ENCODE measurements at regions of chr2 and their contacts with region 1.

Region 1: DNA sequence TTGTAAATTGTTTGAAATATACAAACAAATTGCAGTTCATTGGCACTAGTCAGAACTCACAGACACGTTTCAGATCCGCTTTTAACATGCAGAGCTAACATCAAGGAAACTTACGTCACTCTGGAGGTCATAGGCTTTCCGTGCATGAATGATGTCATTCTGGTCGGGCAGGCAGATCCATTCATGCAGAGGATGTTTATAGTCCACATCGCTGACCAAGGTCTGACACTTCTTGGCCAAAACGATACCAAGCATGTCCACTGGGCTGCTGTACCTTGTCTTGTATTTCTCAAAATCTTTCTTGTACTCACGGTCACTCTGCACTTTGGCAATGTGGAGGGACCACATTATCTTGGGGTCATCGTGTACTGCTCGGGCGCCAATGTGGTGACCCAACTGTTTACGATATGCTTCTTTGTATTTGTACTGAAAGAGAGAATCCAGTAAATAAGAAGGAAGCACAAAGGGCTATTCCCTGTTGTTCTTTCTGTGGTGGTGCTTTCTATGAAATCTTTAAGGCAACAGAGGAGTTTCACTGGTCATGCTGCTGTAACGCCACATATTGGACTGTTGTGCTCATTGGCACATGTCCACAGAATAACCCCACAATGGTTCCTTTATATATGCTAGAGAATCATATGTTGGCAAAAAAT is 114.8 kb downstream of the NEB start:
- DNase-seq: no peak
- ATAC-seq: no peak
- H3K4me3 ChIP-seq: no peak overlapping the region
- H3K4me3 Mint-ChIP-seq: no peak overlapping the region
- H3K27ac ChIP-seq: no peak overlapping the region
- H3K27ac Mint-ChIP-seq: no peak overlapping the region
- H3K4me1 ChIP-seq: no peaks in the 10 kb centered on the region
- H3K4me1 Mint-ChIP-seq: peaks cover 10% of the 10 kb centered on the region
- H3K27me3 ChIP-seq: no peaks in the 10 kb centered on the region
- H3K27me3 Mint-ChIP-seq: no peaks in the 10 kb centered on the region
- CTCF ChIP-seq: no peak

Region 2: DNA sequence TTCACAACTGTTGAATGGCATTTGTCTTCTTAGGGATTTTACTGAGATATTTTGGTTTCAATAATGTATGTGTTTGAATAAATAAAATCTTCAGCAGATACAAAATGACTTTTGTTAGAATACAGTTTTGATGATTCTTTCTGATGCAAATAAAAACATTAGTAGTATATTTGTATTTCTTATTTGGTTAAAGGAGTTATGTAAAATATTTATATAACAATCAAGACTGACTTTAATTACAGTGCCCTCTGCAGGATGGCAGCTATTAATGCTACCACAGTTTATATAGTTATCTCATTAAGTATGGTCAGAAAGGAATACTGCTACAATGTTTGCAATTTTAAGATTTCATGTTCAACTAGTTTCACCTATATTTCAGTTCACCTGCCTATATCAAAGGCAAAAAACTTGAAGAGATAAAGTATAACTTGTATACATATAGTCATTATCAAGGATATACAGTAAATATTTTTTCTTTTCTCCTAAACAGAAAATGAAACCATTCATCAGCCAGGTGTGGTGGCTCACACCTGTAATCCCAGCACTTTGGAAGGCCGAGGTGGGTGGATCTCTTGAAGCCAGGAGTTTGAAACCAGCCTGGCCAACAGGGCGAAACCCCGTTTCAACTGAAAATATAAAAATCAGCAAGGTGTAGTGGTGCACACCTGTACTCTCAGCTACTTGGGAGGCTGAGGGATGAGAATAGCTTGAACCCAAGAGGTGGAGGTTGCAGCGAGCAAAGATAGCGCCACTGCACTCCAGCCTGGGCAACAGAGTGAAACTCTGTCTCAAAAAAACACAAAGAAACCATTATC is 189.0 kb after region 1 on chr2:
- CTCF ChIA-PET with region 1: no interaction called
- POLR2A ChIA-PET with region 1: no interaction called
- intact Hi-C with region 1: loop called in 1 of 2 experiments (anchors 10 kb)
- DNase-seq: peak in 2 of 9 experiments; percentile 52 to 65
- ATAC-seq: peak; percentile 56
- H3K4me3 ChIP-seq: no peak overlapping the region
- H3K4me3 Mint-ChIP-seq: no peak overlapping the region
- H3K27ac ChIP-seq: no peak overlapping the region
- H3K27ac Mint-ChIP-seq: no peak overlapping the region
- H3K4me1 ChIP-seq: peaks cover 12% of the 10 kb centered on the region
- H3K4me1 Mint-ChIP-seq: peaks cover 7% of the 10 kb centered on the region
- H3K27me3 ChIP-seq: no peaks in the 10 kb centered on the region
- H3K27me3 Mint-ChIP-seq: no peaks in the 10 kb centered on the region
- CTCF ChIP-seq: peak; percentile 61

Measured in CD8-positive, alpha-beta T cell (primary cell).